Dendritic cell treated with granulocyte-macrophage colony-stimulating factor and Interleukin-4, amounts not matched to agents 40 ng/mL and 50 ng/mL, for 4 days (primary cell): ENCODE measurements at regions of chr5 and their contacts with region 1.

Region 1: GRCh38 chr5:101942321-101943215 is 353.5 kb downstream of the SLCO4C1 start:
- H3K4me3 Mint-ChIP-seq: no peak overlapping the region
- H3K27ac Mint-ChIP-seq: no peak overlapping the region
- H3K4me1 Mint-ChIP-seq: peaks cover 20% of the 10 kb centered on the region
- H3K27me3 Mint-ChIP-seq: no peaks in the 10 kb centered on the region

Region 2: DNA sequence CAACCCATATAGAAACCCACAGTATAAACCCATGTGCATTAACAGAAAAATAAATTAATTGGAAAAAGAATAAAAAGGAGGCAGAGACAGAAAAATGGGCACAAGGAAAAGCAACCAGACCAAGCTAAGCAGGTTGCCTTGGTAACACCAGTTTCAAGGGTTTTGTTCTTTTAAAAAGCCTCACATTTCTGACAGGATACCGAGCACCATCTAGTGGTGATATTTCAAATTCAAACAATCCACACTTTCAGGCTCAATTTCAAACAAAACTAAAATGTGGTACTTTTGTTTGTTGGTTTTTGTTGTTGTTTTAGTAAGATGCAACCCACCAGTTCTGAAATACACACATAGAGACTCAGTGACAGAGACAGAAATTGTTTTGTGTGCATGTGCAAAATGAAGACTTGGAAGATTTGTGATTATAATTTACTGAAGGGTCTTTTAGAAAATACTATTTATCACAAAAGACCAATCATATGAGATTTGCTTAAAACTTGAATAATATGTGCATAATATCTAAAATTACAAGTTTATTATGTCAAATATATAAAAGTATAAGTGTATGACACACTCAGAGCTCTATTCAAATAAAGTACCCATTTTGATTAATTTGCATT is 35.3 kb after region 1 on chr5:
- intact Hi-C with region 1: loop called (anchors 1 kb)
- H3K4me3 Mint-ChIP-seq: no peak overlapping the region
- H3K27ac Mint-ChIP-seq: no peak overlapping the region
- H3K4me1 Mint-ChIP-seq: no peaks in the 10 kb centered on the region
- H3K27me3 Mint-ChIP-seq: peaks cover 1% of the 10 kb centered on the region

Region 3: DNA sequence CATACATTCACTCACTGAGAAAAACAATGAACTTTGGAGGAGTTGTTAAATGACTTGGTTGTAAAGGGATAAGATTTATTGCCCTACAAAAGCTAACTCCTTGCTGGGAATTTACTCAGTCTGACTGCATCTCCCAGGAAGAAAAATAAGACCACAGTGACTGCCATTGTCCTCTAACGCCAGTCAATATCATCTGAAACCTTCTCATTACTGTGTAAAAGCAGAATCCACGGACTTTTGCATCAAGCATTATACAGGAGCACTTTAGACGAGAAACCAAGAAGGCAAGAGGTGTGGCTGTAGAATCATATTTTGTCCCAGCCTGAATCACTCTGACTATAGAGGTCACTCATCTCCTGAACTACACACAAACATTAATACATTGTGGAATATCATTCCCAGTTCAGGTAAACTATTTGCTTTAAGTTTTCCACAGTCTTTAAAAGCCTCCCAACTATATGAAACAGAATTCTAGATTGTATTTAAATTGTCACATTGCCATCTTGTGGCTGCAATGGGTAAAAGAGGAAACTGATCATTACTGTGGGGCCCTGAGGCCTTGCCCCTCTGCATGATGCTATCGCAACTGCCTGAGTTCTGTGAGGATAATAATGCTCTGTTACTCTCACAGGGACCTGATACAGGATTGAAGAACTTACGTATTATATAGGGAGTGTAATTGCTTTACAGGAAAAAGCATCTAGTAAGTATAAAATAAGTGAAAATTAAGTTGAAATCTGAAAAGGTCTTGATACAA is 210.6 kb after region 1 on chr5:
- intact Hi-C with region 1: loop called (anchors 2 kb)
- H3K4me3 Mint-ChIP-seq: no peak overlapping the region
- H3K27ac Mint-ChIP-seq: no peak overlapping the region
- H3K4me1 Mint-ChIP-seq: no peaks in the 10 kb centered on the region
- H3K27me3 Mint-ChIP-seq: no peaks in the 10 kb centered on the region

Region 4: GRCh38 chr5:102223542-102224477 is 281.2 kb after region 1 on chr5:
- intact Hi-C with region 1: loop called (anchors 2 kb)
- H3K4me3 Mint-ChIP-seq: no peak overlapping the region
- H3K27ac Mint-ChIP-seq: no peak overlapping the region
- H3K4me1 Mint-ChIP-seq: no peaks in the 10 kb centered on the region
- H3K27me3 Mint-ChIP-seq: no peaks in the 10 kb centered on the region

Region 5: DNA sequence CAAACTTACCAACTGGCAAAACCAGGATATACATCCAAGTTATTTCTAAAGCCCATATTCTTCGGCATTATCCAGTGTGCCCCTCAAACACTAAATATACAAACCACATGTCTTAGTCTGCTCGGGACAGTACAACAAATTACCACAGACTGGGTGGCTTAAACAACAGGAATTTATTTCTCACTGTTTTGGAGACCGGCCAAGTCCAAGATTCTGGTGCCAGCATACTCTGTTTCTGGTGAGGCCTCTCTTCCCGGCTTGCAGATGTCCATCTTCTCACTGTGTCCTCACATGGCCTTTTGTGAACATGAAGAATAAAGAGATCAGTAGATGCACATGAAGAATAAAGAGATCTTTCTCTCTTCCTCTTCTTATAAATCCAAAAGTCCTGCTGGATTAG is 569.1 kb after region 1 on chr5:
- intact Hi-C with region 1: loop called (anchors 5 kb)
- H3K4me3 Mint-ChIP-seq: no peak overlapping the region
- H3K27ac Mint-ChIP-seq: no peak overlapping the region
- H3K4me1 Mint-ChIP-seq: no peaks in the 10 kb centered on the region
- H3K27me3 Mint-ChIP-seq: peaks cover 5% of the 10 kb centered on the region

Region 6: GRCh38 chr5:103498211-103498610 is 1555.6 kb after region 1 on chr5:
- intact Hi-C with region 1: no loop called
- H3K4me3 Mint-ChIP-seq: no peak overlapping the region
- H3K27ac Mint-ChIP-seq: no peak overlapping the region
- H3K4me1 Mint-ChIP-seq: no peaks in the 10 kb centered on the region
- H3K27me3 Mint-ChIP-seq: no peaks in the 10 kb centered on the region